Gastrocnemius medialis (tissue), 4 donors: ENCODE measurements at regions of chr18 and their contacts with region 1.

Region 1: DNA sequence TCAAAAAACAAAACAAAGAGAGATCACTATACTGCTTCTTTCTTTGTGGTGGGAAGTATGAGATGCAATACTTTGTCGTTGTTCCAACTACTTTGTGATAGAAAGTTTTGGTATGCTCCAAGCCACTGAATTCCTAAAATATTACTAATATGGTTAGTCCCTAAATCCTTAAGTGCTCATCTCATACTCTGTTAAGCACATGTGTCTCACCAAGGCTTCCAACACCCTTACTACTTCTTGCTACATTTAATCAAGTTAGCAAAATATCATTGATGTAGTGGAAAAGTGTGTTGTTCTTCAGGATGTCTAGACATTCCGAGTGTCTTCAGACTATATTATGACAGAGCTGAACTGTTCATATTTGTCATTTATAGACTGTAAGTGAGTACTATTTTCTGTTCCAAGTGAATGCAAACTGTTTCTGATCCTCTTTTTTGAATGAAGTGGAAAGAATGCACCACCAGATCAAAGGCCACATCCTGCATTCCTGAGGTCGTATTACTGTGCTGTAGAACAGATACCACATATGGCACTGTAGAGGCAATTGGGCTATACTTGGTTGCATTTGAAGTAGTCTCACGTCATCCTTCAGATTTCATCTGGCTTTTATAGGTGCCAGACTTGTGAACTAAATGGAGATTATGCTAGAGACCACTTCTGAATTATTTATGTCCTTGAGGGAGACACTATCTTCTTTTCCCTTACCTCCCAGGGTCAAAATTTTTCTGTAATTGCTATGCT is 298.4 kb upstream of the ZNF521 start:
- DNase-seq: no peak
- ATAC-seq: no peak
- H3K4me3 ChIP-seq: no peak overlapping the region
- H3K27ac ChIP-seq: no peak overlapping the region
- H3K4me1 ChIP-seq: no peaks in the 10 kb centered on the region
- H3K27me3 ChIP-seq: no peaks in the 10 kb centered on the region
- CTCF ChIP-seq: no peak
- POLR2A ChIP-seq: no peak

Region 2: GRCh38 chr18:25561918-25562317 is 88.5 kb before region 1 on chr18:
- in situ Hi-C with region 1: loop called in 1 of 4 experiments (anchors 25 kb)
- intact Hi-C with region 1: no loop called
- DNase-seq: no peak
- ATAC-seq: no peak
- H3K4me3 ChIP-seq: no peak overlapping the region
- H3K27ac ChIP-seq: no peak overlapping the region
- H3K4me1 ChIP-seq: peaks cover 12 to 14% of the 10 kb centered on the region in 2 donors
- H3K27me3 ChIP-seq: no peaks in the 10 kb centered on the region
- CTCF ChIP-seq: peak in 2 of 5 experiments; percentile 27 to 38
- POLR2A ChIP-seq: no peak

Region 3: DNA sequence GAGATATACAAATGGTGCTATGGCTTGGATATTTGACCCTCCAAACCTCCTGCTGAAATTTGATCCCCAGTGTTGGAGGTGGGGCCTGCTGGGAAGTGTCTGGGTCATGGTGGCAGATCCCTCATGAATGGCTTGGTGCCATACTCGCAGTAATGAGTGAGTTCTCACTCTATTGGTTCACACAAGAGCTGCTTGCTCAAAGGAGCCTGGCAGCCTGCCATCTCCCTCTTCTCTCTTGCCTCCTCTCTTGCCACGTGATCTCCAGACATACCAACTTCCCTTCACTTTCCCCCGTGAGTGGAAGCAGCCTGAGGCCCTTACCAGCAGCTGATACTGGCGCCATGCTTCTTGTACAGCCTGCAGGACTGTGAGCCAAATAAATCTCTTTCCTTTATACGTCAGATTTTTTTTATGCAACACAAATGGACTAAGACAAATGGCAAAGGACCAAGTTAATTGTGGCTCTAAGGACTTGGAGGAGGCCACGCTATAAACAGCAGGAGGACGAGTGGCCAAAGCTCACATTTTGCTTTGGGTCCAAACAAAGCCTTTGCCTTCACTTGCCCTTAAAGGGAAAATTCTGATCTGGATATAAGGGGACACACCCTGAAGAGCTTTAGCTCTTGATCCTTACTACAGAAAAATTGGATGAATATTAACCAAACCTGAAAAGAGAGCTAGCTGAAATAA is 225.3 kb after region 1 on chr18:
- in situ Hi-C with region 1: no loop called
- intact Hi-C with region 1: no loop called
- DNase-seq: no peak
- ATAC-seq: no peak
- H3K4me3 ChIP-seq: no peak overlapping the region
- H3K27ac ChIP-seq: no peak overlapping the region
- H3K4me1 ChIP-seq: no peaks in the 10 kb centered on the region
- H3K27me3 ChIP-seq: no peaks in the 10 kb centered on the region
- CTCF ChIP-seq: no peak
- POLR2A ChIP-seq: no peak